B cell (primary cell): ENCODE measurements at regions of chr12 and their contacts with region 1.

Region 1: GRCh38 chr12:53352331-53353256 is 16.4 kb upstream of the SP7 start:
- DNase-seq: peak; percentile 91
- ATAC-seq: peak; percentile 100
- H3K4me3 ChIP-seq: no peak overlapping the region
- H3K4me3 Mint-ChIP-seq: no peak overlapping the region
- H3K27ac ChIP-seq: no peak overlapping the region
- H3K27ac Mint-ChIP-seq: peak overlapping the region; percentile 61
- H3K4me1 ChIP-seq: peaks cover 4 to 5% of the 10 kb centered on the region in 2 donors
- H3K4me1 Mint-ChIP-seq: peaks cover 6% of the 10 kb centered on the region
- H3K27me3 ChIP-seq: no peaks in the 10 kb centered on the region
- H3K27me3 Mint-ChIP-seq: no peaks in the 10 kb centered on the region
- CTCF ChIP-seq: peak; percentile 87

Region 2: DNA sequence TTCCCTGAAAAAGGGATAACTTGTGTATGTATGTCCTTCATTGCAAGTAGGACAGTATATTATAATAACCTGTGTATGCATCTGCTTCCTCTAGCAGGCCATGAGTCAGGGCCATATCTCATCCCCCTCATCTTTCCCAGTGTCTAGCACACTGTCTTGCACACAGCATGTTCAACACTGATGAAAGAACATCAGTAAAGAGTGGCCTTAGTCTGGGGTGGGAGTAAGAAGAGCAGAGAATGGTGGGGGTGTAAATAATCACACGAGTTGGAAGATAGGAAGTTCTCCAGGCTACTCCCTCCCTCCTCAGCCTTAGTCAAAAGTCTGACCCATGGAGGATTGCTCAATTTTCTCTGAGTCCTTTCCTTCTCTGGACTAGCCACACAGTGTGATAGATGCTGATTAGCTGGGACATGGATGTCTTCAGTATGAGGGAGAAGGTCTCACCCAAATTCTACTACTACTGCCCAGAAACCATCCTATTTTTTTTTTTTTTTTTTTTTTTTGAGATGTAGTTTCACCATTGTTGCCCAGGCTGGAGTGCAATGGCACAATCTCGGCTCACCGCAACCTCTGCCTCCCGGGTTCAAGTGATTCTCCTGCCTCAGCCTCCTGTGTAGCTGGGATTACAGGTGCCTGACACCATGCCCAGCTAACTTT is 12.8 kb after region 1 on chr12:
- CTCF ChIA-PET with region 1: interaction called, 19 read pairs
- POLR2A ChIA-PET with region 1: interaction called, 4 read pairs
- intact Hi-C with region 1: no loop called
- DNase-seq: no peak
- ATAC-seq: no peak
- H3K4me3 ChIP-seq: no peak overlapping the region
- H3K4me3 Mint-ChIP-seq: peak overlapping the region; percentile 75
- H3K27ac ChIP-seq: peak overlapping the region in 1 of 2 donors; percentile 28
- H3K27ac Mint-ChIP-seq: peak overlapping the region; percentile 84
- H3K4me1 ChIP-seq: peaks cover 12 to 17% of the 10 kb centered on the region in 2 donors
- H3K4me1 Mint-ChIP-seq: peaks cover 13% of the 10 kb centered on the region
- H3K27me3 ChIP-seq: no peaks in the 10 kb centered on the region
- H3K27me3 Mint-ChIP-seq: no peaks in the 10 kb centered on the region
- CTCF ChIP-seq: no peak

Region 3: GRCh38 chr12:53402871-53403270 is 50.3 kb after region 1 on chr12:
- CTCF ChIA-PET with region 1: interaction called, 15 read pairs
- POLR2A ChIA-PET with region 1: no interaction called
- intact Hi-C with region 1: no loop called
- DNase-seq: no peak
- ATAC-seq: no peak
- H3K4me3 ChIP-seq: no peak overlapping the region
- H3K4me3 Mint-ChIP-seq: no peak overlapping the region
- H3K27ac ChIP-seq: no peak overlapping the region
- H3K27ac Mint-ChIP-seq: no peak overlapping the region
- H3K4me1 ChIP-seq: no peaks in the 10 kb centered on the region
- H3K4me1 Mint-ChIP-seq: peaks cover 3% of the 10 kb centered on the region
- H3K27me3 ChIP-seq: no peaks in the 10 kb centered on the region
- H3K27me3 Mint-ChIP-seq: no peaks in the 10 kb centered on the region
- CTCF ChIP-seq: no peak

Region 4: DNA sequence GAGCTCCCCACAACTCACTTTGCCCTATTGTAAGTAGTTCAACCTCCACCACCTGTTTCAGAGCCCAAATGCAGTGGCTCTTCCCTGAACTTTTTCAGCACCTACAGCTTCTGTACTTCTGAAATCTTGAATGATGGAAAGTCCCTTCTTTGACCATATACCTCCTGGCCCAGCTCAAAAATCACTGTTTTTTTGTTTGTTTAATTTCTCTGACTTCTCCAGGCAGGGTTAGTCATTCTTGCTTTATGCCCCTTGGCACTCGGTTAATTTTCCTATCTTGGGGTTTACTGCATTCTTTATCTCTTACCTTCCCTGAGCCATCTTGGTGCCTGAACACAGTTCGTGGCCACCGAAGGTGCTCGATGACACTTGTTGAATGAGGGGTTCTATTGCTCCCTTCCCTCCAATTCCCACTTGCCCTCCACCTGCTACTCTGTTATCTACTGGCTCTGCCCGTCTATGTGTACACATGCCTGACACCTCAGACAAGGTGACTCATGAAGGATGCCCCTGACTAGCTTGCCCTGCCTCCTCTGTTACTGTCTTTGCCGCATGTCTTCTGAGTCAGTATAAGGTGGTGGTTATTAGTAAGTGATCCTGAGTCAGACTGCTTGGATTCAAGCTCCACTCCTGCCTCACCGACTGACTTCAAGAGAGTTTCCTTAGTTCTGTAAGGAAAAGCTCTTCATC is 75.5 kb after region 1 on chr12:
- CTCF ChIA-PET with region 1: interaction called, 384 read pairs
- POLR2A ChIA-PET with region 1: interaction called, 6 read pairs
- intact Hi-C with region 1: no loop called
- DNase-seq: no peak
- ATAC-seq: no peak
- H3K4me3 ChIP-seq: no peak overlapping the region
- H3K4me3 Mint-ChIP-seq: no peak overlapping the region
- H3K27ac ChIP-seq: no peak overlapping the region
- H3K27ac Mint-ChIP-seq: no peak overlapping the region
- H3K4me1 ChIP-seq: no peaks in the 10 kb centered on the region
- H3K4me1 Mint-ChIP-seq: no peaks in the 10 kb centered on the region
- H3K27me3 ChIP-seq: no peaks in the 10 kb centered on the region
- H3K27me3 Mint-ChIP-seq: no peaks in the 10 kb centered on the region
- CTCF ChIP-seq: no peak

Region 5: GRCh38 chr12:53887006-53887405 is 534.4 kb after region 1 on chr12:
- CTCF ChIA-PET with region 1: no interaction called
- POLR2A ChIA-PET with region 1: no interaction called
- intact Hi-C with region 1: no loop called
- DNase-seq: no peak
- ATAC-seq: no peak
- H3K4me3 ChIP-seq: no peak overlapping the region
- H3K4me3 Mint-ChIP-seq: no peak overlapping the region
- H3K27ac ChIP-seq: no peak overlapping the region
- H3K27ac Mint-ChIP-seq: no peak overlapping the region
- H3K4me1 ChIP-seq: no peaks in the 10 kb centered on the region
- H3K4me1 Mint-ChIP-seq: no peaks in the 10 kb centered on the region
- H3K27me3 ChIP-seq: peaks cover 0 to 12% (median 2%) of the 10 kb centered on the region in 4 experiments
- H3K27me3 Mint-ChIP-seq: peaks cover 17% of the 10 kb centered on the region
- CTCF ChIP-seq: no peak